Activated CD4-positive, alpha-beta T cell treated with anti-CD3 and anti-CD28 coated beads, Interleukin-2, amount 10 ng/mL, durations not matched to agents 24 days and 14 days (primary cell): ENCODE measurements at regions of chr5 and their contacts with region 1.

Region 1: DNA sequence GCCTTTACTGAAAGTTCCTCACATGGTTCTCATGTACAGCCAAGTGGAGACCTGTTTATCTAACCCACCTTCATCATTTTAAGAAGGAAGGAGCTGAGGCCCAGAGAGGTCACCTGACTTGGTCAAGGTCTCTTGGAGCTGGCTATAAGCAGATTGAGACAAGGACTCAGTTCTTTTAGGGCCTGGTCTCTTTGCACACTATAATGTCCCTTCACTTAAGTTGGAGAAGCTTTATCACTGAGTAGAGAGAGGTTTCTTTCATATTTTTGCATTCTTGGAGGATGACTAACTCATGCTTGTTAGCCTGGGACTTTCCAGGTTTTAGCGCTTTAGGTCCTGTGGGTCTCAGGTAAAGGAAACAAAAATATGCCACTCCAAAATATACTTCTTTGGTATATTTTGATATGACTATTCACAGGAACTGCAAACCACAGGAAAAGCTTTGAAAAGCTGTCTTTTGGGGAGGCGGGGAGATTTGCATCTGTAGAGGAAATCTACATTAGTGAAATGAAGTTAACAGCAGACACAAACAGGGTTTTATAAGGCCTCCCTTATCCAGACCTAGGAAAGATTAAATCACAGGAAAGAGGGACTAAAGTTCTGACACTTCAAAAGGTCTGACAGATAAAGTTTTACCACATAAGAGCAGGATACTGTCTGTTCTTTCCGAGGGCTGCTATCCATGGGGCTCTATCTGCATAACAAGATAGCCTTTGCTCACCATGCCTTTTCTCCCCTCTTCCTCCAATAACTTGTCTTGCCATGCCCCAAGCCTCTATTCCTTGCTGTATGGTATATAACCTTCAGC is 95.8 kb upstream of the ANKRD55 start:
- DNase-seq: peak; percentile 89
- H3K4me3 Mint-ChIP-seq: peak overlapping the region; percentile 67
- H3K27ac Mint-ChIP-seq: peak overlapping the region; percentile 89
- H3K4me1 Mint-ChIP-seq: peaks cover 57% of the 10 kb centered on the region
- H3K27me3 Mint-ChIP-seq: no peaks in the 10 kb centered on the region

Region 2: GRCh38 chr5:55994574-55995333 is 334.2 kb before region 1 on chr5 and contains the start of gene IL6ST:
- intact Hi-C with region 1: loop called (anchors 1 kb)
- DNase-seq: peak; percentile 99
- H3K4me3 Mint-ChIP-seq: peak within 1 kb of the TSS; percentile 93
- H3K27ac Mint-ChIP-seq: peak within 1 kb of the TSS; percentile 94
- H3K4me1 Mint-ChIP-seq: peaks cover 52% of the 10 kb centered on the region
- H3K27me3 Mint-ChIP-seq: no peaks in the 10 kb centered on the region
- total RNA-seq, gene IL6ST: 65.1 and 68.2 TPM in 2 replicates

Region 3: DNA sequence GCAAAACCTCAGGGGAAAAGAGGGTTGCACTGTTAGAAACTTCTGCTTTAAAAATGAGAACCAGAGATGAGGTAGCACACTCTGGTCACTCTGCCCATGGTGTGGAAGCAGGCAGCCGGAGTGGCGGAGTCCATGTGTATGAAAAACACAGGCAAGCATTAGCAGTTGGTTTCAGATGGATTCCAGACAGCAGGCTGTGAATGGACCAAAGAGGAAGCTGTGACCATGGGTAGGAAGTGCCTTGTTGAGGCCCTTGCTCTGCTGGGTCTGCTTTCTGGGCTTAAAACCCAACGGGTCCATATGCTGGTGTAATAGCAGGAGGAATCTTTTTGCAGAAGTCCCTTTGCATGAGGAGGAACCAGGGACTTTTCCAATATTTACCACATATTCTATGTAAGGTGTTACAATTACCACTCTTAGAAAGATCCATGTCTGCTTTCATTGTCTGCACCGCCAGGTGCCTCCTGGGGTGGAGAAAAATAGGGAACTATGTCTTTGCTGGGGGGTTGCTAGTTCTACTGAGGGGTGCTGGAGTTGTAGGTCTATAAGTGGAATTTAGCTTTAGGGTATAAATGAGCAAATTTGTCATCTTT is 172.9 kb before region 1 on chr5:
- intact Hi-C with region 1: loop called (anchors 2 kb)
- DNase-seq: peak; percentile 66
- H3K4me3 Mint-ChIP-seq: peak overlapping the region; percentile 44
- H3K27ac Mint-ChIP-seq: peak overlapping the region; percentile 92
- H3K4me1 Mint-ChIP-seq: peaks cover 74% of the 10 kb centered on the region
- H3K27me3 Mint-ChIP-seq: no peaks in the 10 kb centered on the region

Region 4: DNA sequence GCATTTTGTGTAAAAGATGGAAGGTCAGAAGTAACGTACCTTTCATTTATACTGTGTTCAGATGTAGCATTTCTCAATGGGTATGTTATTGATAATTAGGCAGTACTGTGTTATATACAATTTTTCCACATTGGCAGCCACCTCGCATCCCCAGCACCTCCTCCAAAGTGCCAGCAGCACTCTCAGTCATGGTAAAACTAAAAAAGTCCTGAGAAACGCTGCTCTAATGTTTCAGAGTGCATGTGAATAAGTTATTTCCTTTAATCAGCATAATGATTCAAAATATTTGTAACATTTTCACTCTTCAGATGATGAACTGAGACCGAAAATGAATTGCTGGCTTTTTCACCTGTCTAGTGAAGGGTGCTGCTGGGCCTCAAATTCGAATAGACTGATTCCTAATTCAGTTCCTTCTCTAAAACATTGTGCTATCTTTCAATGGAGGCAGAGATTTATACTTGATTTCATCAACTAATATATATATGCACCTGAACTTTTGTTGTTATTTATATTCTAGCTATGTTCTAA is 15.9 kb before region 1 on chr5:
- intact Hi-C with region 1: loop called (anchors 1 kb)
- DNase-seq: no peak
- H3K4me3 Mint-ChIP-seq: no peak overlapping the region
- H3K27ac Mint-ChIP-seq: no peak overlapping the region
- H3K4me1 Mint-ChIP-seq: peaks cover 14% of the 10 kb centered on the region
- H3K27me3 Mint-ChIP-seq: no peaks in the 10 kb centered on the region

Region 5: GRCh38 chr5:56358703-56359681 is 30.0 kb after region 1 on chr5:
- intact Hi-C with region 1: no loop called
- DNase-seq: no peak
- H3K4me3 Mint-ChIP-seq: no peak overlapping the region
- H3K27ac Mint-ChIP-seq: peak overlapping the region; percentile 17
- H3K4me1 Mint-ChIP-seq: peaks cover 2% of the 10 kb centered on the region
- H3K27me3 Mint-ChIP-seq: no peaks in the 10 kb centered on the region

Region 6: GRCh38 chr5:56595374-56595965 is 266.5 kb after region 1 on chr5:
- intact Hi-C with region 1: no loop called
- DNase-seq: no peak
- H3K4me3 Mint-ChIP-seq: no peak overlapping the region
- H3K27ac Mint-ChIP-seq: no peak overlapping the region
- H3K4me1 Mint-ChIP-seq: peaks cover 16% of the 10 kb centered on the region
- H3K27me3 Mint-ChIP-seq: peaks cover 3% of the 10 kb centered on the region

Region 7: GRCh38 chr5:56610093-56610698 is 281.2 kb after region 1 on chr5:
- intact Hi-C with region 1: loop called (anchors 2 kb)
- DNase-seq: peak; percentile 79
- H3K4me3 Mint-ChIP-seq: peak overlapping the region; percentile 50
- H3K27ac Mint-ChIP-seq: peak overlapping the region; percentile 80
- H3K4me1 Mint-ChIP-seq: peaks cover 79% of the 10 kb centered on the region
- H3K27me3 Mint-ChIP-seq: no peaks in the 10 kb centered on the region

Region 8: DNA sequence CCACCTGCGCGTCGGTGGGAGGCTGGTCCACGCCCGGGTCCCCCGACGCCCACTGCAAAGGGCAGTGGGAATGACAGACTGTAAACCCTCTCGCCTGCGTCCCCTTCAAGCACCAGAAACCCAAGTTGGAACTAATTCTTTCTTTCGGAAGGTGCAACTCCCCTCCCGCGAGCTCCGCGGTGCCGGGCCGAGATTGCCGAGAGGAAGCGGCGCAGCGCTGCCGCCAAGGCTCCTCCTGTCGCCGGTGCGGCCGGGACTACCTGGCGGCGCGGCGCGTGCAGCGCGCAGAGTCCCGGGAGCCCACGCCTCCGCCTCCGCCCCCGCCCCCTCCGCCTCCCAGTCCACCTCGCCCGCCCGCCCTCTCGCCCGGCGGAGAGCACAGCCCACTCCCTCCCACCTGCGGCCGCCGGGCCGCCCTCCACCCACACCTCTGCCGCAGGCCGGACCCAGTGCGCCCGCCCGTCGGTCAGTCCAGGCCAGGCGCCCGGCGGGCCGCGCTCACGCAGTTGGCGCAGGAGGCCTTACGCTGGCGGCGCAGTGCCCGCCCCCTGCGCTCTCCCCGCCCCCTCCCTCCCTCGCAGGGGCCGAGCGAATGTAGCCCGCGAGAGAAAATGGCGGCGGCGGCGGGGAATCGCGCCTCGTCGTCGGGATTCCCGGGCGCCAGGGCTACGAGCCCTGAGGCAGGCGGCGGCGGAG is 486.2 kb after region 1 on chr5 and contains the start of gene MAP3K1:
- intact Hi-C with region 1: loop called (anchors 1 kb)
- DNase-seq: peak; percentile 94
- H3K4me3 Mint-ChIP-seq: peak within 1 kb of the TSS; percentile 91
- H3K27ac Mint-ChIP-seq: peak within 1 kb of the TSS; percentile 92
- H3K4me1 Mint-ChIP-seq: peaks cover 43% of the 10 kb centered on the region
- H3K27me3 Mint-ChIP-seq: peaks cover 3% of the 10 kb centered on the region
- total RNA-seq, gene MAP3K1: 27.6 and 27.9 TPM in 2 replicates